ENCODE measurements at regions of chr17 and their contacts with region 1.

Region 1: GRCh38 chr17:19753049-19753444 is 4.9 kb upstream of the ALDH3A1 start:
- DNase-seq: peak; percentile 49
- H3K4me3 ChIP-seq: no peak overlapping the region
- H3K27ac ChIP-seq: peak overlapping the region; percentile 79 to 97
- H3K4me1 ChIP-seq: peaks cover 10 to 18% of the 10 kb centered on the region in 2 experiments; a peak in 3 of 4 replicates
- H3K27me3 ChIP-seq: no peaks in the 10 kb centered on the region
- CTCF ChIP-seq: no peak
- EP300 ChIP-seq: peak in 1 of 2 experiments; percentile 79; a peak in 1 of 4 replicates
- RAD21 ChIP-seq: no peak

Region 2: DNA sequence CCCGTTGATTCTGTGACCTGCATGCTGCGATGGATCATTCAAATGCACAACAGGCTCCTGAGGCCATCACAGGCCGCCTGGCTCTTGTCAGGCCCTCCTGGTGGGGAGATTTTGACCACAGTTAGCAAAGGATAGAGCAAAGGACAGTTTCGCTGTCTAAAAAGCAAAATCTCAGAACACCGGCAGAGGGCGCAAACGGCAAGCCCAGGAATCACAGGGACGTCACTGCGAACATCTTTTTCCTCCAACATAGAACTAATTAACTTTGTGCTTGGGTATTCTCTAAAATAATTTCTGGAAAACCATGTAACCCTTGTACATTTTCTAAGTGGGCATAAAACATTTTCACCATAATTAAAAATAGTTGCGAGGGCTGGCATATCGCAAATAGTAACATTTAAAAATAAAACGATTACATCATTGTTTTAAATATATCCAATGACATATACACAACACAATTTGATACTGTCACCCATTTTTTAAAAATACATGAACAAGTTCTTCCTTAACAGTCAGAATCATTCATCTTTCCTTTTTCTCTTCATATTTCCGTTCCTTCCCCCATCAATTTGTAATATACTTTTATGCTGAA is 239.1 kb before region 1 on chr17:
- CTCF ChIA-PET with region 1: interaction called, 13 read pairs
- POLR2A ChIA-PET with region 1: no interaction called
- DNase-seq: peak; percentile 74
- H3K4me3 ChIP-seq: no peak overlapping the region; a peak in 1 of 4 replicates
- H3K27ac ChIP-seq: peak overlapping the region in 1 of 2 experiments; percentile 16; a peak in 1 of 4 replicates
- H3K4me1 ChIP-seq: peaks cover 0 to 5% of the 10 kb centered on the region in 2 experiments; a peak in 1 of 4 replicates
- H3K27me3 ChIP-seq: no peaks in the 10 kb centered on the region
- CTCF ChIP-seq: peak; percentile 97
- EP300 ChIP-seq: no peak
- RAD21 ChIP-seq: peak; percentile 98

Region 3: GRCh38 chr17:19672009-19672750 is 80.9 kb before region 1 on chr17:
- CTCF ChIA-PET with region 1: no interaction called
- POLR2A ChIA-PET with region 1: no interaction called
- DNase-seq: no peak
- H3K4me3 ChIP-seq: no peak overlapping the region
- H3K27ac ChIP-seq: no peak overlapping the region
- H3K4me1 ChIP-seq: no peaks in the 10 kb centered on the region; a peak in 1 of 4 replicates
- H3K27me3 ChIP-seq: no peaks in the 10 kb centered on the region
- CTCF ChIP-seq: peak; percentile 44
- EP300 ChIP-seq: no peak
- RAD21 ChIP-seq: peak; percentile 41

Region 4: GRCh38 chr17:19787733-19788357 is 34.8 kb after region 1 on chr17:
- CTCF ChIA-PET with region 1: no interaction called
- POLR2A ChIA-PET with region 1: no interaction called
- DNase-seq: no peak
- H3K4me3 ChIP-seq: no peak overlapping the region
- H3K27ac ChIP-seq: no peak overlapping the region
- H3K4me1 ChIP-seq: no peaks in the 10 kb centered on the region; a peak in 1 of 4 replicates
- H3K27me3 ChIP-seq: no peaks in the 10 kb centered on the region
- CTCF ChIP-seq: no peak
- EP300 ChIP-seq: no peak
- RAD21 ChIP-seq: no peak

Region 5: DNA sequence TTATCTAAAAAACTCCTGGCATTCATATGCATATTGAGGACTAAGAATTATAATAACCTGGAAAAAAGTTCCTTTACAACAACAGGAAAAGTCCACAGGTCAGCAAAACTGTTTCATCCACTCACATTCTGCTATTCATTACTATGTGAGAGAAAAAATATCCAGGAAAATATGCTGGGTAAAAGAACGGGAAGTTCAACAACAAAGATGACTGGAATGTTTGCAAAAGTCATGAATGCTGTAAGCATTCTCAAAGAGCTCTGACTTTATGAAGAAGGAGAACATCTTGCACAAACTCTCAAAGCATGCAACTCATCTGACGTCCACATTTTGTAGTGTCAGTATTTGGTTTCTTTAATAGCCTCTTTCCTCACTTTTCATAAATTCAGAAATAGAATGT is 52.0 kb after region 1 on chr17:
- CTCF ChIA-PET with region 1: no interaction called
- POLR2A ChIA-PET with region 1: no interaction called
- DNase-seq: no peak
- H3K4me3 ChIP-seq: no peak overlapping the region
- H3K27ac ChIP-seq: no peak overlapping the region
- H3K4me1 ChIP-seq: no peaks in the 10 kb centered on the region
- H3K27me3 ChIP-seq: no peaks in the 10 kb centered on the region
- CTCF ChIP-seq: no peak
- EP300 ChIP-seq: no peak
- RAD21 ChIP-seq: no peak

Region 6: DNA sequence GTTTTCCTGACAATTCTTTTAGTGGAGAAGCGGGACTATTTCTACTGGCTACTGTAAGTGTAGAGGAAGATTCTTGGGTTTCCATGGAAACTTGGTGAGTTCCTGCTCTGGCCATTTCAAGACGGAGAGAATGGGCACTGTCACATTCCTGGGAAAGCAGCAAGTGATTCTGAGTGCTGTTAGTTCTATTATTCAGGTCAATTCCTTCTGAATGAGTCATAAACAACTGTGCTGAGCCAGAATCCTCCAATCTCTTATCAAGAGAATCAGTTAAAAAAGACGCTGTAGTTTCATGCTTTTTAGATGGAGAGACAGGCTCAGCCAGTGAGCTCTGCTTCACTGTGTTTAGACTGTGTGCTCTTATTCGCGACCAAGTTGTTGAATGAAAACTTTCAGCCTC is 205.0 kb after region 1 on chr17:
- CTCF ChIA-PET with region 1: no interaction called
- POLR2A ChIA-PET with region 1: no interaction called
- DNase-seq: peak; percentile 14
- H3K4me3 ChIP-seq: peak overlapping the region in 1 of 2 experiments; percentile 3; a peak in 1 of 4 replicates
- H3K27ac ChIP-seq: peak overlapping the region; percentile 79 to 94; a peak in 3 of 4 replicates
- H3K4me1 ChIP-seq: peaks cover 0 to 12% of the 10 kb centered on the region in 2 experiments; a peak in 3 of 4 replicates
- H3K27me3 ChIP-seq: no peaks in the 10 kb centered on the region
- CTCF ChIP-seq: no peak
- EP300 ChIP-seq: peak in 1 of 2 experiments; percentile 60; a peak in 1 of 4 replicates
- RAD21 ChIP-seq: no peak

Measured in SK-N-SH (cell line).